ENCODE measurements at regions of chr16 and their contacts with region 1.

Region 1: GRCh38 chr16:15484662-15485061 is 50.3 kb downstream of the BMERB1 start:
- DNase-seq: no peak
- H3K4me3 ChIP-seq: no peak overlapping the region
- CTCF ChIP-seq: no peak

Region 2: DNA sequence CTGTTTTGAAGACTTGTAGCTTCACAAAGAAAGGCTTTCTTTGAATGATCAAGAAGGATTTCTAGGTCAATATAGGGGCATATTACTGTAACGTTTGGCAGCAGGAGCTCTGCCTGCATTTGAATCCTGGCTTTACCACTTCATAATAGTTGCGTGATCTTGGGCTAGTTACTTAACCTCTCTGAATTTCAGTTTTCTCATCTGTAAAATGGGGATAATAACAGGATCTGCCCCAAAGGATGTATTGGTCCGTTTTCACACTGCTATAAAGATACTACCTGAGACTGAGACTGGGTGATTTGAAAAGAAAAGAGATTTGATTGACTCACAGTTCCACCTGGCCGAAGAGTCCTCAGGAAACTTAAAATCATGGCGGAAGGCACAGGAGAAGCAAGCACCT is 37.8 kb before region 1 on chr16:
- in situ Hi-C with region 1: loop called (anchors 5 kb)
- DNase-seq: no peak
- H3K4me3 ChIP-seq: no peak overlapping the region
- CTCF ChIP-seq: no peak

Region 3: DNA sequence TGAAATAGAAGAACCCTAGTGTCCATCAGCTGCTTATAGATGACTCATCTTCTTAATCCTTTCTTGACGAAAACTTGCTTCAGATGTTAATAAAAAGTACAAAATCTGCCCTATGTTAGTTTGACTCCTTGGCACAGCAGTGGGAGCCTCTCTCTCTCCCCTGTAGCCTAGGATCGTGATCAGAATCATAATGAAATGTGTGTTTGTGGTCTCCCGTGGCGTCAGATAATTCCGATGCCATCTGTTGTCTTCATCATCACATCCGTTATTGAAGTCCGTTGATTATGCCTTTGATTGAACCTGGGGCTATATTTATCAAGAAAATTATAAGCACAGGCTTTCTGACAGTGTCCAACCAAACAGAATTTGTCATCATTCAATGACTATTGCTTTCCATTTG is 52.2 kb after region 1 on chr16:
- in situ Hi-C with region 1: no loop called
- DNase-seq: no peak
- H3K4me3 ChIP-seq: no peak overlapping the region
- CTCF ChIP-seq: no peak

Region 4: GRCh38 chr16:15548482-15548891 is 63.8 kb after region 1 on chr16:
- in situ Hi-C with region 1: loop called (anchors 5 kb)
- DNase-seq: peak; percentile 22
- H3K4me3 ChIP-seq: no peak overlapping the region
- CTCF ChIP-seq: no peak

Region 5: DNA sequence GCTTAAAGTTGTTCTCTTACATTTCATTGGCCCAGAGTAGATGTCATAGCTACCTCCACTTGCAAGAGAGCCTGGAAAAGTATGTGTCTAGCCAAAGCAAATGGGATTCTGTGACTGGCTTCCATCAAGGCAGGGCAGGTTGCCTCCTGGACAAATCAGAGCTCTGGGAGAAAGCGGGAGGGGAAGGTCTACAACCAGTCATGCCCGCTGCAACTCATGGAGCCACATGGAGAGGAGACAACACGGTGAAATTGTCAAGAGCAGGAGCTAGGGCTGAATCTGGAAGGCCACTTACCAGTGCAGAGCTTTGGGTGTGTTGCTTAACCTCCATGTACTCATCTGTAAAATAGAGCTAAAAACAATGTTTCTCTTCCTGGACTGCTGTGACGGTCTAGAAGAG is 74.5 kb after region 1 on chr16:
- in situ Hi-C with region 1: no loop called
- DNase-seq: no peak
- H3K4me3 ChIP-seq: no peak overlapping the region
- CTCF ChIP-seq: no peak

Region 6: DNA sequence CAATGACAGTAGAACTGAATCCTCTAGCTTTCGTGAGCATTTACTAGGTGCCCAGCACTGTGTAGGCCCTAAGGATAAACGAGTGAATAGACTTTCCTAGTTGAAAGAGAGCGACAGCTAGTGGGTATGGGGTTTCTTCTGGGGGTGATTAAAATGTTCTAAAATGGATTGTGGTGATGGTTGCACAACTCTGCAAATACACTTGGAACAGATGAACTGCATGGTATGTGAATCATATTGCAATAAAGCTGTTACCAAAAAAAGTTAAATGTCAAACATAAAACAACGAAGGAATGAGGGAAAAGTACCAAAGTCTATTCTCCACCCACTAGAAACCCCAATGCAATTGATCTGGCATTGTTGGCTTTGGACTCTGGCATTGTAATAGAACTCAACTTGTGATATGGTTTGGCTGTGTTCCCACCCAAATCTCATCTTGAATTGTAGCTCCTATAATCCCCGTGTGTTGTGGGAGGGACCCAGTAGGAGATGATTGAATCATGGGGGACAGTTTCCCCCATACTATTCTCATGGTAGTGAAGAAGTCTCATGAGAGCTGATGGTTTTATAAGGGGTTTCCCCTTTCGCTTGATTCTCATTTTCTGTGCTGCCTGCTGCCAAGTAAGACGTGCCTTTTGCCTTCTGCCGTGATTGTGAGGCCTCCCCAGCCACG is 87.8 kb after region 1 on chr16:
- in situ Hi-C with region 1: no loop called
- DNase-seq: peak; percentile 46
- H3K4me3 ChIP-seq: no peak overlapping the region
- CTCF ChIP-seq: no peak

Region 7: DNA sequence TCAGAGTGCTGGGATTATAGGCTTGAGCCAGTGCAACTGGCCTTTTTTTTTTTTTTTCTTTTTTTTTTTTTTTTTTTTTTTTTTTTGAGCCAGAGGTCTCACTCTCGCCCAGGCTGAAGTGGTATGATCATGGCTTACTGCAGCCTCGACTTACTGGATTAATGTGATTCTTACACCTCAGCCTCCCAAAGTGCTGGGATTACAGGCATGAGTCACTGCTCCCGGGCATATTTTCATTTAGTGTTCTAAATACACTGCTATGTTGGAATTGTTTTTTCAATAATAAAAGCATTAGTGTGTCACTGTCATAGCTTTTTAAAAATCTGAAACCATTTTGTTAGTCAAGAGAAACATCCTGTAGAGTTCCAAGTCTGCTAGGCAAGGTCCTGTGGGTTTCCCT is 205.6 kb after region 1 on chr16:
- in situ Hi-C with region 1: no loop called
- DNase-seq: no peak
- H3K4me3 ChIP-seq: no peak overlapping the region
- CTCF ChIP-seq: no peak

Measured in astrocyte of the cerebellum (primary cell).